Activated T-helper 2 cell treated with anti-CD3 and anti-CD28 coated beads, Interferon-gamma antibody, Interleukin-2, Interleukin-4, amounts not matched to agents 10 μg/mL and 5 μg/mL and 100 μg/mL, durations not matched to agents 14 hours and 24 hours and 36 hours (primary cell): ENCODE measurements at regions of chr5 and their contacts with region 1.

Region 1: GRCh38 chr5:148687427-148687826 is 33.1 kb upstream of the HTR4 start:
- DNase-seq: no peak
- H3K4me3 Mint-ChIP-seq: no peak overlapping the region
- H3K27ac Mint-ChIP-seq: no peak overlapping the region
- H3K4me1 Mint-ChIP-seq: peaks cover 18% of the 10 kb centered on the region
- H3K27me3 Mint-ChIP-seq: peaks cover 12% of the 10 kb centered on the region

Region 2: GRCh38 chr5:148507648-148508047 is 179.8 kb before region 1 on chr5:
- intact Hi-C with region 1: no loop called
- DNase-seq: no peak
- H3K4me3 Mint-ChIP-seq: no peak overlapping the region
- H3K27ac Mint-ChIP-seq: no peak overlapping the region
- H3K4me1 Mint-ChIP-seq: peaks cover 4% of the 10 kb centered on the region
- H3K27me3 Mint-ChIP-seq: peaks cover 7% of the 10 kb centered on the region

Region 3: GRCh38 chr5:148653836-148654781 is 33.3 kb before region 1 on chr5 and contains the start of gene HTR4:
- intact Hi-C with region 1: no loop called
- DNase-seq: no peak
- H3K4me3 Mint-ChIP-seq: no peak within 1 kb of the TSS
- H3K27ac Mint-ChIP-seq: no peak within 1 kb of the TSS
- H3K4me1 Mint-ChIP-seq: no peaks in the 10 kb centered on the region
- H3K27me3 Mint-ChIP-seq: peaks cover 45% of the 10 kb centered on the region
- total RNA-seq, gene HTR4: not detected in 2 replicates

Region 4: GRCh38 chr5:148666353-148666752 is 21.1 kb before region 1 on chr5:
- intact Hi-C with region 1: no loop called
- DNase-seq: no peak
- H3K4me3 Mint-ChIP-seq: no peak overlapping the region
- H3K27ac Mint-ChIP-seq: no peak overlapping the region
- H3K4me1 Mint-ChIP-seq: no peaks in the 10 kb centered on the region
- H3K27me3 Mint-ChIP-seq: peaks cover 5% of the 10 kb centered on the region

Region 5: GRCh38 chr5:148708854-148709253 is 21.4 kb after region 1 on chr5:
- intact Hi-C with region 1: loop called (anchors 2 kb)
- DNase-seq: no peak
- H3K4me3 Mint-ChIP-seq: no peak overlapping the region
- H3K27ac Mint-ChIP-seq: peak overlapping the region; percentile 68
- H3K4me1 Mint-ChIP-seq: peaks cover 33% of the 10 kb centered on the region
- H3K27me3 Mint-ChIP-seq: peaks cover 5% of the 10 kb centered on the region